Activated naive CD4-positive, alpha-beta T cell treated with anti-CD3 and anti-CD28 coated beads for 36 hours (primary cell): ENCODE measurements at regions of chr13 and their contacts with region 1.

Region 1: DNA sequence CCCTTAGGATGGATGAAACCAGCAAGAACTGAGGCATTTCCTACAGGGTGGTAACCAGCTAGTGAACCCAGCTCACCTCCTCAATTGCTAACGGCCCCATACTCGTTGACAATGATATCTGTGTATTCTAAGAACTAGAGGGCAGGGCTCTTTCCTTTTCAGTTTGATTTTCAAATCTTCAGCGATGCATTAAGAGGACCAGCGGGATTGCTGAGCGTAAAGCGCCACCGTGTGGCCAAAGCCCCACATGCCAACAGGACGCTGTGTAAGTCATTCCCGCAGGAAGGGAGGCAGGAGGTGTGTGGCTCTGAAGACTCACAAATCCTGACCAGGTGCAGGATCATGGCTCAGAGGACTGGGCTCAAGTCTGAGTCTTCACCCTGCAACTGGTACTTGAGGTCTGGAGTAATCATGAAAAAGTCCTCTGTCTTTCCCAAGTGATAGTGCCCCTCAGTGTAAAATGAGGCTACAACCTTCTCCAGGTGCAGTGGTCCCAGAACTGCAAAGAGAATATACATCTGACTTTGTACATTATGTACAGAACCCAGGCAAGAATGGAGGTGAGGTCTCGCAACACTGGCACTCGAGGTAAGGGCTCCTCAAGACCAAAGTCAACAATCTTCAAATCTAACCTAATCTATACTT is 40.9 kb downstream of the C13orf42 start:
- DNase-seq: peak; percentile 88
- H3K4me3 Mint-ChIP-seq: no peak overlapping the region
- H3K27ac Mint-ChIP-seq: no peak overlapping the region
- H3K4me1 Mint-ChIP-seq: peaks cover 3% of the 10 kb centered on the region
- H3K27me3 Mint-ChIP-seq: peaks cover 3% of the 10 kb centered on the region

Region 2: DNA sequence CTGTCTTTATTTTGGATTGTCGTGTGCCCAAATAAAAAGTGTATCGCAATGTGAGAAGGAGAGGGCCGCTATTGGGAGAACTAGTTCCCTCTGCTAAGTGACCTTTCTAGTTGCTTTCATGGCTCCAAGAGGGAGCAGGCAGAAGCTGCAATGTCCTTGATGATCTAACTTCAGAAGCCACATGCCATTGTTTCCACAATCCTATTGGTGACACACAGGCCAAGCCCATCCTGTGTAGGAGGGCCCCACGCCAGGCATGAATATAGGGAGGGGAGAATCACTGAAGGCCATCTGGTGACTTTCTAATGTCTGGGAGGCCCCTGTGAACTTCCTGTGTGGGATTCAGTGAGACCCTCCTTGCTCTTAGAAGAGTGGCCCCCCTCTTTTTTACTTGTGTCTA is 1229.9 kb before region 1 on chr13:
- CTCF ChIA-PET with region 1: no interaction called
- intact Hi-C with region 1: loop called (anchors 5 kb)
- DNase-seq: no peak
- H3K4me3 Mint-ChIP-seq: no peak overlapping the region
- H3K27ac Mint-ChIP-seq: no peak overlapping the region
- H3K4me1 Mint-ChIP-seq: no peaks in the 10 kb centered on the region
- H3K27me3 Mint-ChIP-seq: no peaks in the 10 kb centered on the region

Region 3: GRCh38 chr13:50801087-50801931 is 268.8 kb before region 1 on chr13:
- CTCF ChIA-PET with region 1: interaction called, 3 read pairs
- intact Hi-C with region 1: loop called (anchors 1 kb)
- DNase-seq: peak; percentile 80
- H3K4me3 Mint-ChIP-seq: no peak overlapping the region
- H3K27ac Mint-ChIP-seq: no peak overlapping the region
- H3K4me1 Mint-ChIP-seq: peaks cover 5% of the 10 kb centered on the region
- H3K27me3 Mint-ChIP-seq: no peaks in the 10 kb centered on the region

Region 4: GRCh38 chr13:51101636-51102235 is 31.6 kb after region 1 on chr13:
- CTCF ChIA-PET with region 1: no interaction called
- intact Hi-C with region 1: no loop called
- DNase-seq: no peak
- H3K4me3 Mint-ChIP-seq: no peak overlapping the region
- H3K27ac Mint-ChIP-seq: no peak overlapping the region
- H3K4me1 Mint-ChIP-seq: no peaks in the 10 kb centered on the region
- H3K27me3 Mint-ChIP-seq: peaks cover 10% of the 10 kb centered on the region